ENCODE measurements at regions of chr6 and their contacts with region 1.

Region 1: DNA sequence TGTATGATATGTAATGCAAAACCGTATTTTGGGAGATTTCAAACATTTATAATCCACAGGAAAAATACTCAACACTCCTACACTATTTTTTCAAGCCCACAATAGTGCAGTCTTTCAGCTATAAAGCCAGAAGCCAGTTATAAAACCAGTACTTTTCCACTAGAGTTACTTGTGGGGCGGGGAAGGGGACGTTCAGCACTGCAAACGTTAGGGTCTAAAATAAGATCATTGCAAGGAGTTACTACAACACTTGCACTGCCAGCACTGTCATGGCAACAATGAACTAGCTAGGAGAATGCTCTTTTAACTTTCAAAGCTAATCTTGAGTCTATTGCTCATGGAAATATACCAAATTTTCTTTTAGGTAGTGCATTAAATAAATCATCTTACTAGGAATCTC is 14.7 kb downstream of the SESN1 start:
- DNase-seq: no peak
- ATAC-seq: no peak
- H3K4me3 ChIP-seq: no peak overlapping the region
- H3K27ac ChIP-seq: no peak overlapping the region
- H3K4me1 ChIP-seq: no peaks in the 10 kb centered on the region
- H3K27me3 ChIP-seq: no peaks in the 10 kb centered on the region
- CTCF ChIP-seq: no peak

Region 2: GRCh38 chr6:109397020-109397419 is 317.0 kb after region 1 on chr6:
- CTCF ChIA-PET with region 1: no interaction called
- POLR2A ChIA-PET with region 1: no interaction called
- intact Hi-C with region 1: loop called (anchors 5 kb)
- DNase-seq: peak; percentile 46
- ATAC-seq: peak; percentile 78
- H3K4me3 ChIP-seq: no peak overlapping the region
- H3K27ac ChIP-seq: no peak overlapping the region
- H3K4me1 ChIP-seq: peaks cover 10% of the 10 kb centered on the region
- H3K27me3 ChIP-seq: no peaks in the 10 kb centered on the region
- CTCF ChIP-seq: peak; percentile 64

Measured in PC-3 (cell line).